CD14-positive monocyte (primary cell): ENCODE measurements at regions of chr9 and their contacts with region 1.

Region 1: GRCh38 chr9:107489687-107490605 is at the start of gene KLF4:
- DNase-seq: peak; percentile 91 to 96 (median 95)
- H3K4me3 ChIP-seq: peak within 1 kb of the TSS; percentile 94 to 100 (median 100)
- H3K4me3 Mint-ChIP-seq: peak within 1 kb of the TSS; percentile 98
- H3K27ac ChIP-seq: peak within 1 kb of the TSS; percentile 99
- H3K27ac Mint-ChIP-seq: peak within 1 kb of the TSS; percentile 96 to 99 (median 98)
- H3K4me1 ChIP-seq: peaks cover 55 to 59% of the 10 kb centered on the region in 2 donors
- H3K4me1 Mint-ChIP-seq: peaks cover 58% of the 10 kb centered on the region
- H3K27me3 ChIP-seq: peaks cover 0 to 13% of the 10 kb centered on the region in 2 donors
- H3K27me3 Mint-ChIP-seq: peaks cover 8 to 22% (median 20%) of the 10 kb centered on the region in 3 donors
- CTCF ChIP-seq: no peak
- polyA plus RNA-seq, gene KLF4: 36.6 to 512 (median 37.2) TPM

Region 2: GRCh38 chr9:107504569-107505377 is 14.8 kb after region 1 on chr9:
- intact Hi-C with region 1: no loop called
- DNase-seq: peak; percentile 67 to 75 (median 74)
- H3K4me3 ChIP-seq: no peak overlapping the region
- H3K4me3 Mint-ChIP-seq: no peak overlapping the region
- H3K27ac ChIP-seq: peak overlapping the region in 1 of 2 donors; percentile 56
- H3K27ac Mint-ChIP-seq: peak overlapping the region in 6 of 7 donors; percentile 74 to 90 (median 82)
- H3K4me1 ChIP-seq: peaks cover 8 to 19% of the 10 kb centered on the region in 2 donors
- H3K4me1 Mint-ChIP-seq: peaks cover 17% of the 10 kb centered on the region
- H3K27me3 ChIP-seq: no peaks in the 10 kb centered on the region
- H3K27me3 Mint-ChIP-seq: peaks cover 0 to 3% (median 0%) of the 10 kb centered on the region in 3 donors
- CTCF ChIP-seq: no peak

Region 3: DNA sequence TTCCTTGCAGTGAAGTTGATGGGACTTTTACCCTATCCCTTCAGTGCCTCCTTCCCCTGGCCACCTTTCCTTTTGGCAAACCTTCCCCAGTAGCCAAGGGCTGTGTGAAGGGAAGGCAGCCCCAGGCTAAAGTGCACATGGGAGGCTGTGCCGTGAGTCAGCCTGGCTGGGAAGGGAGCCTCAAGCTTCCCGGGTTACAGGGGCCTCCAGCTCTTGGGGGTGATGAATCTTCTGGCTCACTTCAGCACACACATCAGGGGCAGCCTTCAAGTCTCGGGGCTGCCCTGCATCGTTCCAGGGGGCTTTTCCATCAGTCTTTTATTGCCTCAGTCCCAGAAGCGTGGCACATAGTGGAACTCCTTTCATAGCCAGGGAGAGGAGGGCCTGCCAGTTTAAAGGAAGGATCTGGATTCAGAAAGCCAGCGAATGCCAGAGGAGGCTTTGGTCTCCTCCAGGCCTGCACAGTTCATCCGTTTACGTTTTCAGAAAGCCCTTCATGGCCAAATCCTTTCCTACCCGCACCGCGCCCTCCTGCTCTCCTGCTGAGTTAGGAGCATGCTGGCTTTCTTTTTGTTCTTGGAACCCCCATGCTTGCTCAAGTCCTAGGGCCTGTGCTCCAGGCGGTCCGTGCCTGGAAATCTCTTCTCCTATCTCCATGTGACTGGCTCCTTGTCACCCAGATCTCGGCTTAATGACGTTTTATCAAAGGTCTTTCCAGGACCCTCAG is 134.5 kb after region 1 on chr9:
- intact Hi-C with region 1: no loop called
- DNase-seq: no peak
- H3K4me3 ChIP-seq: no peak overlapping the region
- H3K4me3 Mint-ChIP-seq: no peak overlapping the region
- H3K27ac ChIP-seq: no peak overlapping the region
- H3K27ac Mint-ChIP-seq: no peak overlapping the region
- H3K4me1 ChIP-seq: no peaks in the 10 kb centered on the region
- H3K4me1 Mint-ChIP-seq: peaks cover 4% of the 10 kb centered on the region
- H3K27me3 ChIP-seq: no peaks in the 10 kb centered on the region
- H3K27me3 Mint-ChIP-seq: no peaks in the 10 kb centered on the region
- CTCF ChIP-seq: no peak

Region 4: GRCh38 chr9:107637421-107638420 is 147.8 kb after region 1 on chr9:
- intact Hi-C with region 1: loop called (anchors 2 to 5 kb)
- DNase-seq: peak; percentile 92 to 97 (median 93)
- H3K4me3 ChIP-seq: peak overlapping the region; percentile 47 to 74 (median 70)
- H3K4me3 Mint-ChIP-seq: peak overlapping the region; percentile 81 to 92
- H3K27ac ChIP-seq: peak overlapping the region; percentile 98 to 99
- H3K27ac Mint-ChIP-seq: peak overlapping the region; percentile 97 to 98 (median 98)
- H3K4me1 ChIP-seq: peaks cover 35 to 41% of the 10 kb centered on the region in 2 donors
- H3K4me1 Mint-ChIP-seq: peaks cover 45% of the 10 kb centered on the region
- H3K27me3 ChIP-seq: no peaks in the 10 kb centered on the region
- H3K27me3 Mint-ChIP-seq: peaks cover 0 to 3% (median 0%) of the 10 kb centered on the region in 3 donors
- CTCF ChIP-seq: no peak

Region 5: DNA sequence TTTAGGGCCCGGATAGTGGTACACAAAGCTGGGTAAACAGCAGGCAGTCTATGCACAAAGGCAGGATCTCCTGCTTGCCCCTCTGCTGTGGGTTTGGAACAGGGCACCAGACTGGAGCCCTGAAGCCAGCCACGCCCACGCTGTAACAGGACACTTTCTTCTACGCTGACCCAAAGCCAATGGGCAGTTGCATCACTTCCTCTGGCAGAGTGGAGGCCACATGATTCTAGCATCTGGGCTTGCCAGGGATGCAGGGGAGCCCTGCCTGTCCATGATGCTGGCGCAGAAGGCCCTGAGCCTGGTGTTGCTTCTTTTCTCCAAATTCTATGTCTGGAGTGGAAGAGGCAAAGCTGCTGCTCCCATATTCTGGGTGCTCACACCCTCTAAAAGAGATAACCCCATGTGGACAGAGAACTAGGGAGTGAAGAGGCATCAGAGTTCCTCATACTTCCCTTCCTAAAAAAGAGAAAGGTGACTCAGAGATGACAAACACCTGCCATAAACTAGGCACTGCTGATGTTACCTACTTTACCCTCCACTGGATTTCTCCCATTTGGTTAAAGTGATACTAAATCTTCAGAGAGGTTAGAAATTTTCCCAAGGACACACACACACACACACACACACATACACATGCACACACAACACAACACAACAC is 260.0 kb after region 1 on chr9:
- intact Hi-C with region 1: loop called in 1 of 2 experiments (anchors 5 kb)
- DNase-seq: peak; percentile 84 to 90 (median 89)
- H3K4me3 ChIP-seq: peak overlapping the region in 1 of 3 experiments; percentile 27
- H3K4me3 Mint-ChIP-seq: peak overlapping the region in 1 of 2 donors; percentile 60
- H3K27ac ChIP-seq: peak overlapping the region; percentile 86 to 98
- H3K27ac Mint-ChIP-seq: peak overlapping the region; percentile 92 to 99 (median 97)
- H3K4me1 ChIP-seq: peaks cover 64 to 68% of the 10 kb centered on the region in 2 donors
- H3K4me1 Mint-ChIP-seq: peaks cover 79% of the 10 kb centered on the region
- H3K27me3 ChIP-seq: no peaks in the 10 kb centered on the region
- H3K27me3 Mint-ChIP-seq: peaks cover 0 to 2% (median 0%) of the 10 kb centered on the region in 3 donors
- CTCF ChIP-seq: no peak

Region 6: GRCh38 chr9:107929443-107929842 is 439.5 kb after region 1 on chr9:
- intact Hi-C with region 1: loop called in 1 of 2 experiments (anchors 5 kb)
- DNase-seq: peak; percentile 84 to 95 (median 88)
- H3K4me3 ChIP-seq: peak overlapping the region in 1 of 3 experiments; percentile 13
- H3K4me3 Mint-ChIP-seq: no peak overlapping the region
- H3K27ac ChIP-seq: peak overlapping the region; percentile 70 to 86
- H3K27ac Mint-ChIP-seq: peak overlapping the region; percentile 85 to 95 (median 90)
- H3K4me1 ChIP-seq: peaks cover 69 to 74% of the 10 kb centered on the region in 2 donors
- H3K4me1 Mint-ChIP-seq: peaks cover 78% of the 10 kb centered on the region
- H3K27me3 ChIP-seq: no peaks in the 10 kb centered on the region
- H3K27me3 Mint-ChIP-seq: peaks cover 0 to 3% (median 0%) of the 10 kb centered on the region in 3 donors
- CTCF ChIP-seq: no peak

Region 7: DNA sequence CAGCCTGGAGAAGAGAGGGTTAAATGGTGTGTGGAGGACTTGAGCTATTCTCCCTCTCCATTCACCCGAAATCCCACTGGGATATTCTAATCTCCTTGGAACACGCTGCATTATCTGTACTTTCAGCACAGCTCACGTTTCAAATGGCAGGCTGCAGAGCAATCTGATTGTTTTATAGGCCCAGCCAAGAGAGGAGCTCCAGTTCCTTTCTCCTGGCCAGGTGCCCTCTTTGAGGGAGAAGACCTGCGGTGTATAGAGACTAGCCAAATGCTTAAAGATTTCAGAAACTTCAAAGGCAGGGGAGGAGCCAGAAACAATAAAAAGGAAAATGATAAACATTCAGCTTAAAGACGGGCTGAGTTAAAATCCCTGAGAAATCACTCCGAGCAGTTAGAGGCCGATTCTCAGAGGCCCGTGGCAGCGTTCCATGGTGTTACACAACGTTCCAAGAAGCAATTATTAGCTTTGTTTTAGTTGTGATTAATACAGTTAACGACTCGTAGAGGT is 563.7 kb after region 1 on chr9:
- intact Hi-C with region 1: loop called in 1 of 2 experiments (anchors 5 kb)
- DNase-seq: no peak
- H3K4me3 ChIP-seq: no peak overlapping the region
- H3K4me3 Mint-ChIP-seq: no peak overlapping the region
- H3K27ac ChIP-seq: no peak overlapping the region
- H3K27ac Mint-ChIP-seq: no peak overlapping the region
- H3K4me1 ChIP-seq: peaks cover 38 to 41% of the 10 kb centered on the region in 2 donors
- H3K4me1 Mint-ChIP-seq: peaks cover 41% of the 10 kb centered on the region
- H3K27me3 ChIP-seq: no peaks in the 10 kb centered on the region
- H3K27me3 Mint-ChIP-seq: peaks cover 1 to 2% (median 1%) of the 10 kb centered on the region in 3 donors
- CTCF ChIP-seq: no peak